ENCODE measurements at regions of chr13 and their contacts with region 1.

Region 1: GRCh38 chr13:35646056-35646774 is 169.7 kb upstream of the MAB21L1 start:
- H3K4me3 ChIP-seq: no peak overlapping the region
- H3K27ac ChIP-seq: no peak overlapping the region
- H3K4me1 ChIP-seq: no peaks in the 10 kb centered on the region
- CTCF ChIP-seq: no peak

Region 2: DNA sequence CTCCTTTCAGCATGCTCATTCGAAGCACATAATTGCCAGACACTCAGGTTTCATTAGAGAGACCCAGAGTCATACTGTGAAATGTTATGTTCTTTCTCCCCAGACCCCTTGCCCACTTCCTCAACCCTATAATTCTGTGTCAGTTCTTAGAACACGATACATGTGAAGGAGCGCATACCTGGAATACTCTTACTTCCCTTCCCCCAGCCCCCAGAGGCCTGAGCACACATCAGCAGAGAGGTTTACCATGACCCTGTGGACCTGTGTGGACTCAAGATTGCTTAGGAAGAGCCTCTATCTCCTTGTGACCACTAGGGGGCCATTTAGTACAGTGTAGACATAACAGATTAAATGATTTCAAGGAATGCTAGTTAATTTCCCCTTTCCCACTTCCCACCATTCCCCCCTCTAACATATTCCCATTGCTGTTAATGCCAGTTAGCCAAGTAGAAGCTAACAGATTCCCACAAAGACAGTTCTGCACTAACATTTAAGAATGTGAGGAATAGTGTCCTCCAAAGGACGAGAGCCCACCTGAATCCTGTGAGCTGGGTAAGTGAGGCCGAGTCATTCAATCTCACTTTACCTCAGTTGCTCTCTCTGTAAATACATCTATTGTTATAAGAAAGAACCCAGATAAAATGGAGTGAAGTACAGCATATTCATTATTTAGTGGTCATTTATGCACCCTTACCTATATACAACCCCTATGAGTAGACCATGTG is 15.5 kb before region 1 on chr13:
- CTCF ChIA-PET with region 1: interaction called, 13 read pairs
- POLR2A ChIA-PET with region 1: no interaction called
- H3K4me3 ChIP-seq: no peak overlapping the region
- H3K27ac ChIP-seq: no peak overlapping the region
- H3K4me1 ChIP-seq: no peaks in the 10 kb centered on the region
- CTCF ChIP-seq: no peak

Region 3: DNA sequence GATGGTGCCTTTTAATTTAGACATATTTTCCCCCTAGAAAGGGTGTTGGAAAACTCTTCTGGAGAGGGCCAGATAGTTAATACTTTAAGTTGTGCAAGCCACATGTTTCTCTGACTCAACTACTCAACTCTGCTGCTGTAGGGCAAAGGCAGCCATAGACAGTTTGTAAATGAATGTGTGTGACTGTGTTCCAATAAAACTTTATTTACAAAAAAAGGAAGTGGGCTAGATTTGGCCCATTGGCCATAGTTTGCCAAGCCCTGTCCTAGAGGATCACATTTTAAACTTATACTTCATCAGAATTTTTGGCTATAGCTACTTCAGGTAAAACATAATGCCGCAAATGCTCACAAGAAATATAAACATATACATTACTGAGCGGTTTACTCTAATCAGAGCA is 136.6 kb after region 1 on chr13:
- CTCF ChIA-PET with region 1: no interaction called
- POLR2A ChIA-PET with region 1: no interaction called
- H3K4me3 ChIP-seq: no peak overlapping the region
- H3K27ac ChIP-seq: no peak overlapping the region
- H3K4me1 ChIP-seq: no peaks in the 10 kb centered on the region
- CTCF ChIP-seq: no peak

Measured in HEK293 (cell line).